ENCODE measurements at regions of chr7 and their contacts with region 1.

Region 1: GRCh38 chr7:100049441-100050311 is at the start of gene ZSCAN21:
- DNase-seq: peak; percentile 85 to 89
- ATAC-seq: peak; percentile 95 to 99 (median 98)
- H3K4me3 ChIP-seq: peak within 1 kb of the TSS; percentile 69 to 92 (median 84)
- H3K27ac ChIP-seq: peak within 1 kb of the TSS; percentile 90 to 98 (median 96)
- H3K4me1 ChIP-seq: peaks cover 4 to 24% (median 12%) of the 10 kb centered on the region in 9 donors
- H3K27me3 ChIP-seq: no peaks in the 10 kb centered on the region
- CTCF ChIP-seq: peak in 4 of 9 donors; percentile 30 to 48 (median 45)
- total RNA-seq, gene ZSCAN21: 5.4 to 10.0 (median 6.9) TPM

Region 2: DNA sequence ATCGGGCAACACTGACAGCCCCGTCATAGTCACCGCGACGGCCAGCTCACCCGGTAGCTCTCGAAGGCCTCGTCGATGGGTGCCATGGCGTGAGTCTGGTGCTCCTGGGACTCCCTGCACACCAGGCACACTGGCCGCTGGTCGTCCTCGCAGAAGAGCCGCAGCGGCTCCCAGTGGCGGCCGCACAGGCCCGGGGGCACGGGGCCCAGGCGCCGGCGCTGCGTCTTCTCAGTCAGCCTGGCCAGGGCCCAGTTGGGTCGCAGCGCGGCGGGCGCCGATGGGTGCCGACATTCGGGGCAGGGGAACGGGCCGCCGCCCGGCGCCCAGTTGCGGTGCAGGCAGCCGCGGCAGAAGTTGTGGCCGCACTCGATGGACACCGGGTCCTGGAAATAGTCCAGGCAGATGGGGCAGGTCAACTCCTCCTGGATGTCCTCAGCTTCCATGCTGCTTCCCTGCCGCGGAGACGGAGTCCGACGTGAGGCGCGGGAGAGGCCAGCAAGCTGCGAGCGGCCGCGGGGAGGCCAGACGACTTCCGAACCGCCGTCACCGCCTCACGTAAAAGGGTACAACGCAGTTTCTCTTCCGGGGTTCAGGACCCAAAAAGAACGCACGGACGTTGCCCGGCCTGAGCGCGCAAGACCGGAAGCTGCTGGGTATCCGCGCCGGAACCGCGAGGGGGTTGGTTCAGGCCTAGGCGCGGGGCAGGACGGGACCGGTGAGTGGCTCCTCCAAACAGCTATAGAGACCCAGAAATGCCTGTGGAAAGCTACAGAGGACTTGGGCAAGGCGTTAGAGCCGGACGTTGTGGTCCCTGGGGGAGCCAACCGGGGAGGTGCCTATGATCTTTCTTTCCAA is 130.5 kb before region 1 on chr7 and contains the start of gene TRIM4:
- intact Hi-C with region 1: loop called in 3 of 10 experiments (anchors 10 kb)
- DNase-seq: peak; percentile 90 to 91
- ATAC-seq: peak; percentile 99 to 100 (median 99)
- H3K4me3 ChIP-seq: peak within 1 kb of the TSS; percentile 70 to 94 (median 90)
- H3K27ac ChIP-seq: peak within 1 kb of the TSS; percentile 63 to 96 (median 90)
- H3K4me1 ChIP-seq: peaks cover 0 to 38% (median 36%) of the 10 kb centered on the region in 9 donors
- H3K27me3 ChIP-seq: no peaks in the 10 kb centered on the region
- CTCF ChIP-seq: peak in 5 of 9 donors; percentile 17 to 54 (median 49)
- total RNA-seq, gene TRIM4: 5.0 to 9.6 (median 6.6) TPM

Region 3: DNA sequence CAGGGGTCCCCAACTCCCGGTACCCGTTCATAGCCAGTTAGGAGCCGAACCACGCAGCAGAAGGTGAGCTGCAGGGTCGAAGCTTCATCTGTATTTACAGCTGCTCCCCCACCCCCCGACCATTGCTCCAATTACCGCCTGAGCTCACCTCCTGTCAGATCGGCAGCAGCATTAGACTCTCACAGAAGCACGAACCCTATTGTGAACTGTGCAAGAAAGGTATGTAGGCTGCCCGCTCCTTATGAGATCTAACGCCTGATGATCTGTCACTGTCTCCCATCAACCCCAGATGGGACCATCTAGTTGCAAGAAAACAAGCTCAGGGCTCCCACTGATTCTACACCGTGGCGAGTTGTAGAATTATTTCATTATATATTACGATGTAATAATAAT is 59.2 kb before region 1 on chr7:
- intact Hi-C with region 1: loop called in 8 of 10 experiments (anchors 5 to 10 kb)
- DNase-seq: no peak
- ATAC-seq: no peak
- H3K4me3 ChIP-seq: peak overlapping the region in 6 of 10 donors; percentile 0 to 31 (median 24)
- H3K27ac ChIP-seq: no peak overlapping the region
- H3K4me1 ChIP-seq: peaks cover 0 to 35% (median 20%) of the 10 kb centered on the region in 9 donors
- H3K27me3 ChIP-seq: peaks cover 0 to 7% (median 0%) of the 10 kb centered on the region in 7 donors
- CTCF ChIP-seq: no peak

Region 4: DNA sequence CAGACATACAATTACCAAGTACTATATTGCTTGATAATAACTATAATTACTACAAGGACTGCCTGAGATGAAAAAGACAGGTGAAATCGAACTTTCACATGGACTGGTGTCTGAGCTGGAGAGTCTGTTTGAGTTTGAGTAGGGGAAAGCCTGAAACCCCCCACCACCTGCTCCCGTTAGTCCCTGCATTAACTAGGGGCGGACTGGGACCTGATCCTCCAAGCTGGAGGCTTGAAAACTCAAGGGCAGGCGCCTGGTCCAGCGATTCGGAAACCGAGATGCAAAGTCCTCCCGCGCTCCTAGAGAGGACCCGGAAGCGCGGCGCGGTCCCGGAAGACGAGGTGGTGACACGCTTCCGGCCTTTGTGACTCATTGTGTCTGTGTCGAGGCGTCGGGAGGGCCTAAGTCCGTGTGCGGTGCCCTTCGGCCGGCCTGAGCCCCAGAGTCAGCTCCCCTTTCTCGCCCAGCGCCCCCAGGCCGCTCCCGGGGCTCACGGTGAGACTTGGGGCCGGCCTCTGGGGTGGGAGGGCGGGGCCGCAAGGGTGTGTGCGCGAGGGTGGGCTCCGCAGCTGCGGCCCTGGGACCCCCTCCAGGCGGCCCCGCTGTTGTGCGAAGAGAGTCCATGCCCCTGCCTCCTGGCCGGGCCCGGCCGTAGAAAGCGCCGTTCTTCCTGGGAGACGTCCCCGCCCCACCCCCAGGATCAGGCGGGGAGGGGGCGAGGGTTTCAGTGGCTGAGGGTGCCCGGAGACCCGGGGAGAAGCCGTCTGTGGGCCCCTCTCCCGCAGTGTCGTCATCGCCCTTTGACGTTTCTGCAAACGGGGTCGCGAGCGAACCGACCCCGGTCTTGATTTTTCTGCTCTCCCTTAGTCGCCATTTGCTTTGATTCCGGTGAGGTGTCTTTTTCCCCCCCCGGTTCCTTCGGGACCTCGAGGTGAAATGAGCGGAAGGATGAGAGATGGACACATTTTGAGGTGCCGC is 34.2 kb before region 1 on chr7 and contains the start of gene ZKSCAN1:
- intact Hi-C with region 1: loop called in 1 of 10 experiments (anchors 5 kb)
- DNase-seq: peak; percentile 85 to 89
- ATAC-seq: peak; percentile 98 to 99 (median 99)
- H3K4me3 ChIP-seq: peak within 1 kb of the TSS; percentile 90 to 100 (median 99)
- H3K27ac ChIP-seq: peak within 1 kb of the TSS; percentile 82 to 100 (median 99)
- H3K4me1 ChIP-seq: peaks cover 0 to 42% (median 34%) of the 10 kb centered on the region in 9 donors
- H3K27me3 ChIP-seq: no peaks in the 10 kb centered on the region
- CTCF ChIP-seq: peak in 1 of 9 donors; percentile 8
- total RNA-seq, gene ZKSCAN1: 37.4 to 68.9 (median 49.7) TPM

Region 5: GRCh38 chr7:100101016-100101862 is 51.6 kb after region 1 on chr7 and contains the starts of genes AP4M1 and MCM7:
- intact Hi-C with region 1: loop called in 3 of 10 experiments (anchors 2 kb)
- DNase-seq: peak; percentile 99
- ATAC-seq: peak; percentile 94 to 97 (median 96)
- H3K4me3 ChIP-seq: peak within 1 kb of the TSS; percentile 57 to 89 (median 78)
- H3K27ac ChIP-seq: peak within 1 kb of the TSS; percentile 81 to 97 (median 93)
- H3K4me1 ChIP-seq: peaks cover 3 to 32% (median 26%) of the 10 kb centered on the region in 9 donors
- H3K27me3 ChIP-seq: no peaks in the 10 kb centered on the region
- CTCF ChIP-seq: no peak
- total RNA-seq, gene AP4M1: 8.4 to 14.4 (median 11.0) TPM
- total RNA-seq, gene MCM7: 11.6 to 30.4 (median 15.5) TPM

Measured in heart right ventricle (tissue), 16 donors.